HEK293T (cell line): ENCODE measurements at regions of chr1 and their contacts with region 1.

Region 1: DNA sequence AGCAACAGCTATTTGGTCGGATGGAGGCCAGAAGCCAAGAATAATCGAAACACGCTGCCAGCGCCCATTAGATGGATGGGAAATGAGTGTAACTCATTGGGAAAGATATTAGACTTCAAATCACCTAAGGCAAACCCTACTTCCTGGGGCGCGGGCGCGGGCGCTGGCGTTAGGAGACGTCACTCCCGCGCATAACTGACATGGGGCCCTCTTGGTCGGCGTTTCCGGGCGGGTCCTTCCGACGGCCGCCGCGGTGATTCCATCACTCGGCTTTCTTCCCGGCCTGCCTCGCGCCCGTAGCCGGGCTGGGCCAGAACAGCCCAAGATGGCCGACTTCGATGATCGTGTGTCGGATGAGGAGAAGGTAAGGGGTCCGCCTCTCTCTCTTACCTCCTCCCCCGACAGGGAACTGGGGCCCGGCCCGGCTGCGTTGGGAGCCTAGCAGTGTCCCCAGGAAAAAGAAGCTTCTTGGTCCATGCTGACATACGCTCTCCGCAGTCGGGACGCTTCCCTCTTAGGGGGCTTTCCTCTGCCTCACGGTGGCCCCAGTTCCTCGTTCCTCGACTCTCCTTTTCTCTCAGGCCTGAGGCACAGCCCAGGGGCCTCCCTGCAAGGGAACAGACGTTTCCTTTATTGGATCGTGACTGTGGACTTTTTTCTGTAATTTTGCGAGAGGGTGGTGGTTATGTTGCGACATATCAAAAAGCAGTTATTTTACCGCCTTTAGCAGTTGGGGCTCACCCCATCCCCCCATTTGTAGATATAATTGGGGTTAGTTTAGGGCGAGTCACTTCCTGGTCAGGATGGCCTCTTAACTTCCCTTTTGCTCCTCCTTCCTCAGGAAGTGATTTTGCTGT is at the start of gene CAPZA1:
- DNase-seq: peak; percentile 94

Region 2: GRCh38 chr1:112501810-112502641 is 117.7 kb before region 1 on chr1:
- CTCF ChIA-PET with region 1: interaction called, 7 read pairs
- POLR2A ChIA-PET with region 1: interaction called, 12 read pairs
- DNase-seq: peak; percentile 65

Region 3: GRCh38 chr1:112637254-112638116 is 17.7 kb after region 1 on chr1:
- CTCF ChIA-PET with region 1: no interaction called
- POLR2A ChIA-PET with region 1: interaction called, 12 read pairs
- DNase-seq: no peak

Region 4: GRCh38 chr1:112706908-112707663 is 87.3 kb after region 1 on chr1 and contains the start of gene RHOC:
- CTCF ChIA-PET with region 1: no interaction called
- POLR2A ChIA-PET with region 1: interaction called, 22 read pairs
- DNase-seq: peak; percentile 90